K562 (cell line): ENCODE measurements at regions of chr3 and their contacts with region 1.

Region 1: DNA sequence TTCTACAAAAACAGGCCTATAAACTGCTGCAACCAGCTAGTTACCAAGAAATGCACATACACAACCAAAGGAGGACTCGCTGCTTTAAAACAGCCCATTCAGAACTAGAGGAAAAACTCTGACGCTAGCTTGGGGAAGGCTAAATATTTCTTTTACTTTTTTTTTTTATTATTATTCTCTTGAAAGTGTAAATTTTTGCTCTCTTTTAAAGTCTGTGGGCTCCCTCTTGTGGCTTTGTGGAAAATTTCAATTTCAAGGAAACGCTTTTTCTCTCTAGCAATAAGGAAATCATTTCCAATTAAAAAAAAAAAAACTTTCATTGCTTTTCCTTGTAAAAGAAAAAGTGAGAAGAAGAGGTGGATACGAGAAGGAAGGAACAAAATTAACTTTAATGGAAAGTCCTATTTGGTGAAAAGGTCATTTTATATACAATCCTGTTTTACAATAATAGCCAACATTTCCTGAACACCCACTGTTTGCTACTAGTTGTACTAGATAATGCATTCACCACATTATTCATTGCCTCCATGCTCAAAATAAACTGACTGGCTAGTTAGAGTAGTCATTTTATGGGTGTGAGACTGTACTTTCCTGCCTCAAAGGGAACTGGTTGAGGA is 51.2 kb upstream of the SAMMSON start:
- DNase-seq: peak; percentile 7 to 38 (median 10)
- ATAC-seq: no peak
- H3K4me3 ChIP-seq: no peak overlapping the region
- H3K27ac ChIP-seq: no peak overlapping the region
- H3K4me1 ChIP-seq: no peaks in the 10 kb centered on the region
- H3K27me3 ChIP-seq: no peaks in the 10 kb centered on the region
- CTCF ChIP-seq: peak in 2 of 3 experiments; percentile 27 to 64; a peak in 3 of 6 replicates
- EP300 ChIP-seq: no peak
- POLR2A ChIP-seq: no peak
- RAD21 ChIP-seq: peak; percentile 49 to 55

Region 2: GRCh38 chr3:69671082-69671952 is 277.0 kb before region 1 on chr3:
- CTCF ChIA-PET with region 1: interaction called, 4 read pairs
- POLR2A ChIA-PET with region 1: no interaction called
- in situ Hi-C with region 1: no loop called
- intact Hi-C with region 1: loop called (anchors 5 kb)
- DNase-seq: peak; percentile 22 to 50 (median 35)
- ATAC-seq: peak; percentile 56; the same call in 2 of the 3 replicates
- H3K4me3 ChIP-seq: no peak overlapping the region
- H3K27ac ChIP-seq: no peak overlapping the region
- H3K4me1 ChIP-seq: no peaks in the 10 kb centered on the region; a peak in 1 of 5 replicates
- H3K27me3 ChIP-seq: no peaks in the 10 kb centered on the region
- CTCF ChIP-seq: peak; percentile 29 to 77 (median 50); a peak in 5 of 6 replicates
- EP300 ChIP-seq: no peak
- POLR2A ChIP-seq: no peak
- RAD21 ChIP-seq: peak; percentile 73 to 75

Region 3: GRCh38 chr3:69791919-69792399 is 156.4 kb before region 1 on chr3:
- CTCF ChIA-PET with region 1: no interaction called
- POLR2A ChIA-PET with region 1: no interaction called
- in situ Hi-C with region 1: no loop called
- intact Hi-C with region 1: loop called (anchors 1 kb)
- DNase-seq: peak; percentile 40 to 81 (median 52)
- ATAC-seq: peak; percentile 90
- H3K4me3 ChIP-seq: no peak overlapping the region; the same call in 1 of the 2 replicates
- H3K27ac ChIP-seq: peak overlapping the region; percentile 78; the same call in 2 of the 3 replicates
- H3K4me1 ChIP-seq: peaks cover 0 to 36% of the 10 kb centered on the region in 2 experiments; a peak in 3 of 5 replicates
- H3K27me3 ChIP-seq: no peaks in the 10 kb centered on the region
- CTCF ChIP-seq: peak; percentile 38 to 74 (median 63); a peak in 5 of 6 replicates
- EP300 ChIP-seq: peak; percentile 99
- POLR2A ChIP-seq: no peak
- RAD21 ChIP-seq: peak; percentile 90 to 92

Region 4: DNA sequence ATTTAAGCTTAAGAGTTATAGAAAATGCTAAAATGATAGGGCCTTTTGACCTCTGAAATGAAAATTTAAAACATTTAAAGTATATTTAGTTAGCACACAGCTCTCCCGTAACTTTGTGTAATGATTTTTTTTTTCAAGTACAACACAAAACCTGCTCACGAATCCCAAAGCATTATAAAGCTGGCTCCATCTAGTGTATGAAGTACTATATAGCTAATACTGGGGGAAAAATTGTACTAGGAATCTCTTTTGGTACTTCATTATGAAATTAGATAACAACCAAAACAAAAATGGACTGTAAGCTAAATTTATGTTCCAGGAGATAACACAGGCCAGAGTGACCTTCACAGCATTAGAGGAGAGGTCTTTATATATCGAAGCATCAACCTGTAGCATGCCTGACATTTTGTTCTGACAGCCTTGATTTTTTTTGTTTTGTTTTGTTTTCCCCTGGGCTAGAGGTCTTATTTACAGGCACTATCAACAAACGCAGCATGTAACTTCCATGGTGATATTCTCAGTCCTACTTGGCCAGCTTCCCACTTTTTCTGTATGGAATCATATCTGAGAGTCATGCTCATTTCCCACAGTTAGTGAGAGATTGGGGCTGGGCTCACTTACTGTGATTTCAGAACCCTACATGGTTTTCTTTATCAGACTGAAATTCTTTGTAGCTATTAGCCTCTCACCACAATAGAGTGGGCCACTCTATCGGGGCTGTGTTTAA is 92.8 kb before region 1 on chr3:
- CTCF ChIA-PET with region 1: no interaction called
- POLR2A ChIA-PET with region 1: no interaction called
- in situ Hi-C with region 1: no loop called
- intact Hi-C with region 1: loop called (anchors 5 kb)
- DNase-seq: peak in 1 of 4 experiments; percentile 20
- ATAC-seq: peak; percentile 75
- H3K4me3 ChIP-seq: no peak overlapping the region
- H3K27ac ChIP-seq: no peak overlapping the region
- H3K4me1 ChIP-seq: peaks cover 0 to 3% of the 10 kb centered on the region in 2 experiments; a peak in 3 of 5 replicates
- H3K27me3 ChIP-seq: no peaks in the 10 kb centered on the region
- CTCF ChIP-seq: peak in 2 of 3 experiments; percentile 14 to 52; a peak in 2 of 6 replicates
- EP300 ChIP-seq: no peak
- POLR2A ChIP-seq: no peak
- RAD21 ChIP-seq: peak; percentile 50 to 64; a peak in 3 of 4 replicates